ENCODE measurements at regions of chr22 and their contacts with region 1.

Region 1: GRCh38 chr22:17628304-17629166 is at the start of gene ATP6V1E1:
- DNase-seq: peak; percentile 90 to 98
- H3K4me3 ChIP-seq: peak within 1 kb of the TSS; percentile 94 to 95
- H3K27ac ChIP-seq: peak within 1 kb of the TSS; percentile 86 to 92
- H3K4me1 ChIP-seq: peaks cover 13% of the 10 kb centered on the region in 2 donors
- H3K27me3 ChIP-seq: no peaks in the 10 kb centered on the region
- CTCF ChIP-seq: no peak
- total RNA-seq, gene ATP6V1E1: 94.6 TPM

Region 2: GRCh38 chr22:17536269-17536668 is 92.3 kb before region 1 on chr22:
- intact Hi-C with region 1: loop called (anchors 5 kb)
- DNase-seq: peak in 1 of 2 donors; percentile 85
- H3K4me3 ChIP-seq: no peak overlapping the region
- H3K27ac ChIP-seq: peak overlapping the region; percentile 41 to 58
- H3K4me1 ChIP-seq: peaks cover 0 to 6% of the 10 kb centered on the region in 2 donors
- H3K27me3 ChIP-seq: no peaks in the 10 kb centered on the region
- CTCF ChIP-seq: peak in 2 of 3 experiments; percentile 8

Region 3: GRCh38 chr22:17570851-17571641 is 57.5 kb before region 1 on chr22:
- intact Hi-C with region 1: loop called (anchors 5 kb)
- DNase-seq: peak in 1 of 2 donors; percentile 90
- H3K4me3 ChIP-seq: peak overlapping the region; percentile 27 to 60
- H3K27ac ChIP-seq: peak overlapping the region; percentile 61 to 86
- H3K4me1 ChIP-seq: peaks cover 4 to 19% of the 10 kb centered on the region in 2 donors
- H3K27me3 ChIP-seq: no peaks in the 10 kb centered on the region
- CTCF ChIP-seq: no peak

Region 4: GRCh38 chr22:17647991-17648390 is 19.5 kb after region 1 on chr22:
- intact Hi-C with region 1: no loop called
- DNase-seq: no peak
- H3K4me3 ChIP-seq: no peak overlapping the region
- H3K27ac ChIP-seq: no peak overlapping the region
- H3K4me1 ChIP-seq: no peaks in the 10 kb centered on the region
- H3K27me3 ChIP-seq: no peaks in the 10 kb centered on the region
- CTCF ChIP-seq: no peak

Region 5: DNA sequence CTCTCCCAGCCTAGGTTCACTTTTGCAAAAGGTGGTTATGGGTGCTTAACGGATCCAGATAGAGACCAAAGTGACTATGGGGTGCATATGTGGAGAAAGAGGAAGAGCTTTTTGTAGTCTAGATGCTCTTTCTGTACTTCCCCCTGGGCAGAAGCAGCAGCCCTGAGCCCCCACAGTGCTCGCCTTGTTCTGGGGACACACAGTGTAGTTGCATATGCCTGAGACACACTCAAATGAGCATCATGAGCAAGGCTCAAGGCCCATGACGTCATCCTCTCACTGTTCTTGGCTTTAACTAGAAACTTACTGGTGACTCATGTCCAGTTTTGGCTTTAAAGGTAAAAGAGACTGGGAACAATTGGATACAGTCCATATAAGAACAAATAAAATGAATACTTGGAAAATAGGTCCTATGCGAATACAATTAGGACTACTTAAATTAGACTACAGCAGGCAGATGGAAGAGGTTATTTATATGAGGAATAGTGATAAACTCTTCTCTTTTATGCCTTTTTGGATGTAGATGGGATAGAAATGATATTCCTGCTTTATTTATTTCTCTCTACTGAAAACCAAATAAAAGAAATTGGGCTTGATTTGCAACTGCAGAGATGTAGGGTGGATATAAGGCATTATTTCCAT is 429.2 kb after region 1 on chr22:
- intact Hi-C with region 1: loop called (anchors 5 kb)
- DNase-seq: peak; percentile 87 to 97
- H3K4me3 ChIP-seq: no peak overlapping the region
- H3K27ac ChIP-seq: peak overlapping the region; percentile 85
- H3K4me1 ChIP-seq: peaks cover 17 to 30% of the 10 kb centered on the region in 2 donors
- H3K27me3 ChIP-seq: no peaks in the 10 kb centered on the region
- CTCF ChIP-seq: no peak

Measured in ascending aorta (tissue), 2 donors.